MCF 10A (cell line): ENCODE measurements at regions of chr3 and their contacts with region 1.

Region 1: GRCh38 chr3:105868742-105869530 is at the start of gene CBLB:
- DNase-seq: peak; percentile 97
- H3K4me3 Mint-ChIP-seq: peak within 1 kb of the TSS; percentile 92
- H3K27ac Mint-ChIP-seq: peak within 1 kb of the TSS; percentile 97
- H3K4me1 Mint-ChIP-seq: peaks cover 35% of the 10 kb centered on the region
- H3K27me3 Mint-ChIP-seq: no peaks in the 10 kb centered on the region
- CTCF ChIP-seq: no peak
- total RNA-seq, gene CBLB: 19.7 and 43.4 TPM in 2 replicates

Region 2: DNA sequence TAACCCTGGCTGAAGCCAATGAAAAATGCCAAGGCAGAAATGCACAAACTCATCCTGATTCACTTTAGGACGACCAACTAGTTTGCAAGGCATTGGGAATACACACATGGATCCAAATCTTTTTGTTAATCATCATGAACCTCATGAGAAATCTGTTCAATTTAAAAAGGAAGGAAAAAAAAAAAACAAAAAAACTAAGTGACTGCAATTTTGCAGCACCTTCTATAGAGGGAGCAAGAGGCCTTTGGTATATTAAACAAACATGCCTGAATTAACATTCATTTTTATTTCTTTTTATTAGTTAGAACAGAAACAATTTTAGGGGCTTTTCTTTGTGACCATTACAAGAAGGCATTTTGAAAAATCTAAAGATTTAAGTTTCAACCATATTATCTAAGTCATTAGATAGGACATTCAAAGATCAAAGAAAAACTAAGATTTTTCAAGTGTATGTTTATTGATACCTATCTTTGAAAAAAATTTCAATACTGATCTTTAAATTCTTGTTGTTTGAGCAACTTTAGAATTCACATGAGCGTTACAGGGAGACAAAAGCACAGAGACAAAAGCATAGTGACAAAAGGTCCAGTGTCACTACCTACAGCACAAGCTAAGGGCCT is 182.5 kb before region 1 on chr3:
- CTCF ChIA-PET with region 1: no interaction called
- POLR2A ChIA-PET with region 1: interaction called, 5 read pairs
- intact Hi-C with region 1: loop called (anchors 2 kb)
- DNase-seq: peak; percentile 23
- H3K4me3 Mint-ChIP-seq: no peak overlapping the region
- H3K27ac Mint-ChIP-seq: peak overlapping the region; percentile 27
- H3K4me1 Mint-ChIP-seq: peaks cover under 1% of the 10 kb centered on the region
- H3K27me3 Mint-ChIP-seq: no peaks in the 10 kb centered on the region
- CTCF ChIP-seq: peak; percentile 73

Region 3: DNA sequence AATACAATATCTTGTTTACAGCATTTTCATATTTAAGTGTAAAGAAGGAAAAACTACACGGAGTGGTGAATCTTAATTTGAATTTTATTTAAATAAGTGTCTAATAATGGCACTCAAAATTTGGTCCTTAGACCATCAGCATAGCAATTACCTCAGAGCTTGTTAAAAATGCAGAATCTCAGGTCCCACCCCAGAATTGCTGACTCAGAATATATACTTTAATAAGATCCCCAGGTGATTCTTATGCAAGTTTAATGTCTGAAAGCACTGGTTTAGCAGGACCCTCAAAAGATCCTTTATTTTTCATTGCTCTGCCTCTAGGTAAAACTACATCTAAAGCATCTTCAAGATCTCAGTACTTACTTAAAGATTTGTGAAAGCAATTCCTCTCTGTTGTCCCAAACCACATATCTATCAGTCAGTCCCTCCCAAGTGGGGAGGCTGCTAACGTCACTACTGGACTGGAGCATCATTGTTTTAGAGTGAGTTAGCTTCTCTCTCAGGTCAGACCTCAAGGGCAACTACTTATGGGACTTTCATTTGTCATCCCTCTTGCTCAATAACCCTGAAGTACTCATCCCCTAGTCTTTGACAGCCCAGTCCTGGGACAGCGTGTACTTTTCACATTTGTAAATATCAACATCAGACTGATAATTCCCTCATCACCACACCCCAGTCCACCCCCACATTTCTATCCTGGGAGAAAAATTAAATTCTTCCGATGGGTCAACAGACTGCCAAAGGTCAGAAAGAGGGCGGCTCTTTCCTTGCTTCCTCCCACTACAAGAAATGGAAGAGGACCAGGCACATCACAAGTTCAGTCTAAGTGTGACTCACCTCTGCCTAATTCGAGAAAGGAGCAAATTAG is 76.8 kb before region 1 on chr3:
- CTCF ChIA-PET with region 1: interaction called, 3 read pairs
- POLR2A ChIA-PET with region 1: interaction called, 4 read pairs
- intact Hi-C with region 1: loop called (anchors 5 kb)
- DNase-seq: peak; percentile 95
- H3K4me3 Mint-ChIP-seq: peak overlapping the region; percentile 55
- H3K27ac Mint-ChIP-seq: peak overlapping the region; percentile 91
- H3K4me1 Mint-ChIP-seq: peaks cover 26% of the 10 kb centered on the region
- H3K27me3 Mint-ChIP-seq: no peaks in the 10 kb centered on the region
- CTCF ChIP-seq: no peak

Region 4: DNA sequence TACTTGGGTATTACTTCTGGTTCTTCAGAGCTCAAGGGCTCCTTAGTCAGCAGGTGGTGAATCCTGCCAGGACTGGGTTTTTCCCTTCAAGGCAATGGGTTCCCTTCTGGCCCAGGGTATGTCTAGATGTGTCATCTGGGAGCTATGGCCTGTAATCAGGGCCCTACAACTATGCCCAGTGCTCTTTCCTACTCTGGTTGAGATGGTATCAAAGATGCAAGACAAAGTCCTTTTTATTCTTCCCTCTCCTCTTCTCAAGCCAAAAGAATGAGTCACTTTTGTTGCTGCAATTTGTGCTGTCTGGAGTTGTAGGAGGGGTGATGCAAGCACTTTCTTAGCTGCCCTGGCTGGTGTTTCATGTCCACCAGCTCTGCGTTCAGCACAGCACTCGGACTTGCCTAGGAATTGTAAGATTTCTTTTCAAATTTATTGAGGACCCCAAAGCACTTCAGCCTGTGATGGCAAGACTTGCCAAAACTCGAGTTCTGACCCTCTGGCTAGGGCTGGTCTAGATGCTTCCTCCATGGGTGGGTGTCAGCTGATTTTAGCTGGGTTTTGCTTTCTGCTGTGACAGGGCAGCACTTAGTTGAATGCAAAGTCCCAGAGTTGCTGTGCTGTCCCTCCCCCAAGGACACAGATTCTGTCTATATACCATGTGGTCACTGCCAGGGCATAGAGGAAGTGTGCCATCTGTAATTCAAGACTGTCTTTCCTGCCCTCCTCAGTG is 129.0 kb after region 1 on chr3:
- CTCF ChIA-PET with region 1: no interaction called
- POLR2A ChIA-PET with region 1: interaction called, 21 read pairs
- intact Hi-C with region 1: loop called (anchors 2 kb)
- DNase-seq: peak; percentile 95
- H3K4me3 Mint-ChIP-seq: peak overlapping the region; percentile 62
- H3K27ac Mint-ChIP-seq: peak overlapping the region; percentile 88
- H3K4me1 Mint-ChIP-seq: peaks cover 11% of the 10 kb centered on the region
- H3K27me3 Mint-ChIP-seq: no peaks in the 10 kb centered on the region
- CTCF ChIP-seq: no peak

Region 5: DNA sequence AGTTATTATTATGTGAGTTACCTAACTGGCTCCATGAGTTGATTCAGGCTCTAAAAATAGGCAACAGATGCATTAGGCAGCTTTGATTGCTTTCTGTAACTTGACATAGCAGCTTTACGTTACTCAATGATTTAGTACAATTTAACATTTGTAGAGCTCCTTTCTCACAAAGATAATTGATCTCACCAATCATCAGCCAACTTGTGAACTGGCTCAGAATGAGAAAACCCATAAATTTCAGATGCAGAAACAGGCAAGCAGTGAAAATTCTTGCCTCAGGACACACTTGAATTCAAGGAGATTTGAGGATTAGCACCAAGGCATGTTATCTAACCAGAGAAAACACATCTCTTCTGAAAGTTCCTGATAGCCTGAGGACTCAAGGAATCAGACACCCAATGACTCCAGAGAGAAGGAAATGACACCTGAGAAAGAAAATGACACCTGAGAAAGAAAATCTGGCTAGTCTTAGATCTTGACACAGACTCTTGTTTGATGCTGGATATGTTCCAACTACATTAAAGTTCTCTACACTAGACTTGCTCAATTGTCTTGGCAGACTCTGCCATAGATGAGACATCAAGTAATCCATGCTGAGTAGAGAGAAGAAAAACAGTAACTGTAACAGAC is 314.9 kb after region 1 on chr3:
- CTCF ChIA-PET with region 1: no interaction called
- POLR2A ChIA-PET with region 1: interaction called, 6 read pairs
- intact Hi-C with region 1: loop called (anchors 5 kb)
- DNase-seq: peak; percentile 93
- H3K4me3 Mint-ChIP-seq: no peak overlapping the region
- H3K27ac Mint-ChIP-seq: peak overlapping the region; percentile 8
- H3K4me1 Mint-ChIP-seq: peaks cover 12% of the 10 kb centered on the region
- H3K27me3 Mint-ChIP-seq: no peaks in the 10 kb centered on the region
- CTCF ChIP-seq: no peak

Region 6: DNA sequence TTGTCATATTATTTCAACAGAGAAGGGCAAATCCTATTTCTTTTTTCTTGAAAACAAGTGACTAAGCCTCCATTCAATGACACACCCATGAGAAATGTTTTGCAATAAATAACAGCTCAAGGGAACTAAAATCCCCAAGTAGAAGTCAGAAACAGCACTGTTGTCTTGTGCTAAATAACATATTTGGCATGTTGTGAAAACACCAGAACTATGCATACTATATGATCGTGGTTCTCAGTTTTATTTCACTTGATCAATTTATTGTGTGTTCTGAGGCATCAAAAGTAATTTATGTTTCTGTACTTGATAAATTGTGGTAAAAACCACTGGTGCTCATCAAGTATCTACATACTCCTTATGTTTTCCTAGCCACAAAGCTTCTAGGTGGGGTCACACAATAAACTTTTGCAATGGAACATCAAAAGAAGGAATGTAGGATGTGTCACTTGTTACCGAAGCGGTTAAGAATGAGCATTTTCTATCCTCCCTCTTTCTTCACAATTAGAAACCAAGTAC is 691.6 kb after region 1 on chr3:
- CTCF ChIA-PET with region 1: interaction called, 3 read pairs
- POLR2A ChIA-PET with region 1: interaction called, 6 read pairs
- intact Hi-C with region 1: loop called (anchors 5 kb)
- DNase-seq: peak; percentile 79
- H3K4me3 Mint-ChIP-seq: peak overlapping the region; percentile 10
- H3K27ac Mint-ChIP-seq: peak overlapping the region; percentile 95
- H3K4me1 Mint-ChIP-seq: peaks cover 17% of the 10 kb centered on the region
- H3K27me3 Mint-ChIP-seq: no peaks in the 10 kb centered on the region
- CTCF ChIP-seq: no peak

Region 7: DNA sequence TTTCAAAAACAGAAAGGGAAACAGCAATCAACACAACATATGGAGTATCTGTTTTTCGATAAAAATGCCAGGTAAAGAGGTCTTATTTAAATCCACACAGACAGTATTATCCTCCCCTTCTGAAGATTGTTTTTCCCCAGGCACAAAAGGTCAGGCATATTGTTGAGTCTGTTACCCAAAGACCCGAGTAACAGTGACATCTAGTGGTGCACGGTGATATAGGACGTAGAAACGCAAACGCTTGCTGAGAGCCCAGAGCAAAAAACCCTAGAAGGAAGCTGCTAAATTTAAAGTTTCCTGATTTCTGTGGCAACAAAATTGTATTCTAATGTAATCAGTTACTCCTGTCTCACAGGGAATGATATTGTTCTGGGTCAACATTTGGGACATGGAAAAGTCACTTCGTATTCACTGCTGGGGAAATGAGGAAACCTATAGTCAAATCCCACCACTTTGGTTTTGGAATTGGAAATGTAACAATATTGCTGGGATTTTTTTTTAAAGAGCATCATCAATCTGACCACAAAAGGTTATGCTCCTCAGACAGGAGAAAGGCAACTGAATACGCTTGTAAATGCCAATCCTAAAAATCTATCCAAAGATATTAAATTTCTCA is 1195.6 kb after region 1 on chr3:
- CTCF ChIA-PET with region 1: interaction called, 3 read pairs
- POLR2A ChIA-PET with region 1: no interaction called
- intact Hi-C with region 1: loop called (anchors 10 kb)
- DNase-seq: peak; percentile 85
- H3K4me3 Mint-ChIP-seq: no peak overlapping the region
- H3K27ac Mint-ChIP-seq: peak overlapping the region; percentile 29
- H3K4me1 Mint-ChIP-seq: peaks cover 39% of the 10 kb centered on the region
- H3K27me3 Mint-ChIP-seq: no peaks in the 10 kb centered on the region
- CTCF ChIP-seq: peak; percentile 83